ENCODE measurements at regions of chr7 and their contacts with region 1.

Region 1: DNA sequence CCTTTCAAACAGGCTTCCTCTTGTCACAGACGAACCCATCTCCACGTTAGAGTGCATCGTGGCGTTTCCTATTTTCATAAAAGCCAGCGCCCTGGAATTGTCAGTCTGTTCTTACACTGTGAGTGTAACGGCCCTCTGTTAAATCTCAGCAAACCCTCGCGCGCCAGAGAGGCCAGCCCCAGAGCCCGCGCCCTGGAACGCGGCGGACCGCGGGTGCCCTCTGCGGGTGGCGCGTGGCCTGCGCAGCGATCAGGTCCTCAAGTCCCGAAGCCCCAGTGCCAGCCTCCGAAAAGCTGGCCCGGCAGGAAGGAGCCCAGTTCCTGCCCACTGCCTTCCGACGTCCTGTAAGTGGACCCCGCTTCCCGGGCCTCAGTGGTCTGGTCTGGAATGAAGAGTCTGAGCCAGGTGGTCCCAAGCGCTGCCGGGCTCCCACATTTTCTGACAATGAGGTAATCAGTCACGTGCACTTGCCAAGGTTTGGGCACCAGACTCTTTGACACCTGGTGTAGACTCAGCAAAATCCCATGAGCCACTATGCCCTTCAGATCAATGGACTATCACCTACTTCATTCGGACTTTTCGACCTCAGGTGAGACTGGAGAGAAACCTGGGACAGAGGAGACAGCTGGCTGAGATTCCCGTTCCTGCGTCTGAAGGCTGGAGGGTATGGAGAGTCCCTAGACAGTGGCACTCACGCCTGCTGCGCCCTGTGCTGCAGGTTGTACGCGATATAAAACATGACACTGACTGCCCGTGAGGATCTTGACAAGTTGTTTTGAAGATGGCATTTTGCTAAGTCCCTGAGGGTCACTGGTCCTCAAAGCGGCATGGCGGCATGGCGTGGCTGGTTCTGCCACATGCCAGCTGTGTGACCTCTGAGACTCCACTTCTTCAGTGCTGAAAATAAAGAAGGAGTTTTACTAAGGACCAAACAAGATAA is 109.4 kb upstream of the LANCL2 start:
- DNase-seq: peak; percentile 48 to 78 (median 77)
- H3K4me3 ChIP-seq: peak overlapping the region in 6 of 7 experiments; percentile 30 to 84 (median 58)
- H3K27ac ChIP-seq: no peak overlapping the region
- H3K4me1 ChIP-seq: peaks cover 0 to 17% (median 14%) of the 10 kb centered on the region in 4 experiments
- H3K27me3 ChIP-seq: peaks cover 5 to 53% (median 18%) of the 10 kb centered on the region in 5 experiments

Region 2: GRCh38 chr7:54773472-54774399 is 482.0 kb before region 1 on chr7:
- CTCF ChIA-PET with region 1: interaction called, 14 read pairs
- POLR2A ChIA-PET with region 1: no interaction called
- DNase-seq: peak; percentile 63 to 74 (median 72)
- H3K4me3 ChIP-seq: peak overlapping the region in 6 of 7 experiments; percentile 44 to 82 (median 58)
- H3K27ac ChIP-seq: no peak overlapping the region
- H3K4me1 ChIP-seq: peaks cover 0 to 5% (median 2%) of the 10 kb centered on the region in 4 experiments
- H3K27me3 ChIP-seq: peaks cover 3 to 18% (median 6%) of the 10 kb centered on the region in 5 experiments

Region 3: DNA sequence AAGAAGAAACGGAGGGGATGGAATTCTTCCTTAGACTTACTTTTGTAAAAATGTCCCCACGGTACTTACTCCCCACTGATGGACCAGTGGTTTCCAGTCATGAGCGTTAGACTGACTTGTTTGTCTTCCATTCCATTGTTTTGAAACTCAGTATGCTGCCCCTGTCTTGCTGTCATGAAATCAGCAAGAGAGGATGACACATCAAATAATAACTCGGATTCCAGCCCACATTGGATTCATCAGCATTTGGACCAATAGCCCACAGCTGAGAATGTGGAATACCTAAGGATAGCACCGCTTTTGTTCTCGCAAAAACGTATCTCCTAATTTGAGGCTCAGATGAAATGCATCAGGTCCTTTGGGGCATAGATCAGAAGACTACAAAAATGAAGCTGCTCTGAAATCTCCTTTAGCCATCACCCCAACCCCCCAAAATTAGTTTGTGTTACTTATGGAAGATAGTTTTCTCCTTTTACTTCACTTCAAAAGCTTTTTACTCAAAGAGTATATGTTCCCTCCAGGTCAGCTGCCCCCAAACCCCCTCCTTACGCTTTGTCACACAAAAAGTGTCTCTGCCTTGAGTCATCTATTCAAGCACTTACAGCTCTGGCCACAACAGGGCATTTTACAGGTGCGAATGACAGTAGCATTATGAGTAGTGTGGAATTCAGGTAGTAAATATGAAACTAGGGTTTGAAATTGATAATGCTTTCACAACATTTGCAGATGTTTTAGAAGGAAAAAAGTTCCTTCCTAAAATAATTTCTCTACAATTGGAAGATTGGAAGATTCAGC is 49.3 kb before region 1 on chr7:
- CTCF ChIA-PET with region 1: no interaction called
- POLR2A ChIA-PET with region 1: no interaction called
- DNase-seq: no peak
- H3K4me3 ChIP-seq: no peak overlapping the region
- H3K27ac ChIP-seq: no peak overlapping the region
- H3K4me1 ChIP-seq: no peaks in the 10 kb centered on the region
- H3K27me3 ChIP-seq: peaks cover 0 to 3% (median 0%) of the 10 kb centered on the region in 5 experiments

Region 4: GRCh38 chr7:55265836-55266642 is 10.3 kb after region 1 on chr7:
- CTCF ChIA-PET with region 1: interaction called, 11 read pairs
- POLR2A ChIA-PET with region 1: no interaction called
- DNase-seq: no peak
- H3K4me3 ChIP-seq: no peak overlapping the region
- H3K27ac ChIP-seq: no peak overlapping the region
- H3K4me1 ChIP-seq: no peaks in the 10 kb centered on the region
- H3K27me3 ChIP-seq: peaks cover 0 to 2% (median 0%) of the 10 kb centered on the region in 5 experiments